Gastrocnemius medialis (tissue), 4 donors: ENCODE measurements at regions of chr17 and their contacts with region 1.

Region 1: DNA sequence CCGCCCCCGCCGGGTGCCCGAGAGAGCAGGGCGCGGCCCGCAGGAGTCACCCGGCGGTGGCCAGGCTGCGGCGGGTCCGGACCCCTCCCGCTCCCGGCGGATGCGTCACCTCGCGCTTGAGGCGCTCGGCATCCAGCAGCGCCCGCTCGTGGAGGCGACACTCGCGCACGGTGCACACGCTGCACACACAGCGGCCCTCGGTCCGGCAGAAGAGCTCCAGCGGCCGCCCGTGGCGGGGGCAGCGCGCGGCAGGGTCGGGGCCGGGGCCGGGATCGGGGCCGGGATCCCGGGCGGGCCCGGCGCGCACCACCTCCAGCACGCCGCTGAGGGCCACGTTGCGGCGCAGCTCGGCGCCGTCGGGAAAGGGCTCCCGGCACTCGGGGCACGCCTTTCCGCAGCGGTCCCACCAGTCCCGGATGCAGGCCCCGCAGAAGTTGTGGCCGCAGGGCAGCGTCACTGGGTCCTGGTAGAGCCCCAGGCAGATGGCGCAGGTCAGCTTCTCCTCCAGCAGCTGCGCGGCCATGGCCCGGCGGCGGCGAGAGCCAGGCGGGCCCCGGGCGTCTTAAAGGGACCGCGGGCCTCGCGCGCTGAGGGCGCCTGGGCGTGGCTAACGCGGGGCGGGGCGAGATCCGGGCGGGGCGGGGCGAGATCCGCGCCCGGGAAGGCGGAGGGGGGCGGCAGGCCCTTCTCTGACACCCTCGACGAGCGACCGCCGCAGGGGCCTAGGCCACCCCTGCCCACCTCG is at the start of gene TRIM65:
- DNase-seq: peak; percentile 76 to 82
- ATAC-seq: peak; percentile 85 to 86
- H3K4me3 ChIP-seq: peak within 1 kb of the TSS; percentile 60 to 72 (median 64)
- H3K27ac ChIP-seq: peak within 1 kb of the TSS; percentile 80 to 96 (median 92)
- H3K4me1 ChIP-seq: peaks cover 16 to 28% of the 10 kb centered on the region in 2 donors
- H3K27me3 ChIP-seq: no peaks in the 10 kb centered on the region
- CTCF ChIP-seq: peak in 4 of 5 experiments; percentile 19 to 65 (median 50)
- POLR2A ChIP-seq: peak; percentile 80 to 81
- total RNA-seq, gene TRIM65: 16.5 to 26.1 (median 22.3) TPM

Region 2: DNA sequence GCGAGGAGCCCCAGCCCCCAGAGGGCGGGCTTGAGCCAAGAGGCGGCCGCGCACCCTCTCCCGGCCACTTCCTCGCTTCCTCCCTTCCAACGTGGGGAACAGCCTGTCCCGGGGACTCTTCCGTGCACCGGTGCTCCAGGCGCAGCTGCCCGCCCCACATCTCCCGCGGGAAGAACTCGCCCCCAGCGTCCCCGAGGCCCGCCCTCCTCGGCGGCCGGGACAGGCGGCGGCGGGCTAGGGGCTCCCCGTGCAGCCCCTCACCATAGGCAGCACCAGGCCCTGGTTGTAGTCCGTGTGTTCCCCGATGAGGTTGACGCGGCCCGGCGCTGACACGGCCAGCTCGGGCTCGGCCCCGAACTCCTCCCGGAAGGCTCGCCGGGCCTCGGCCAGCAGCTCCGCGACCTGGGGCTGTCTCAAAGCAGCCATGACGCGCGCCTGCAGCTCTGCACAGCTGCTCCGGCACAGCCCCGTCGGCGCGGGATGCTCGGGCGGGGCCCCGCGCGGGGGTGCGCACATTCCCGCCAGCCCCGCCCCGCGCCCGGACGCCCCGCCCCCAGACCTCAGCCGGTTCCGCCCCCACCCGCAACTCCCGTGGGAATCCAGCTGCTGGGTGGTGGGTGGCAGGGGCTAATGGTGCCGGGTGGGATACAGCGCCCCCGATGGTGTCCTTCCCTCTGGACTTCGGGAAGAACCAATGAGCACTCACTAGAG is 131.7 kb before region 1 on chr17 and contains the start of gene GALK1:
- in situ Hi-C with region 1: loop called in 1 of 4 experiments (anchors 25 kb)
- intact Hi-C with region 1: loop called (anchors 5 kb)
- DNase-seq: peak; percentile 47 to 59
- ATAC-seq: peak; percentile 80
- H3K4me3 ChIP-seq: peak within 1 kb of the TSS; percentile 58 to 83 (median 72)
- H3K27ac ChIP-seq: peak within 1 kb of the TSS; percentile 54 to 81 (median 74)
- H3K4me1 ChIP-seq: peaks cover 6 to 14% of the 10 kb centered on the region in 2 donors
- H3K27me3 ChIP-seq: no peaks in the 10 kb centered on the region
- CTCF ChIP-seq: peak; percentile 13 to 81 (median 69)
- POLR2A ChIP-seq: peak; percentile 30 to 59
- total RNA-seq, gene GALK1: 8.7 to 18.3 (median 11.0) TPM

Region 3: DNA sequence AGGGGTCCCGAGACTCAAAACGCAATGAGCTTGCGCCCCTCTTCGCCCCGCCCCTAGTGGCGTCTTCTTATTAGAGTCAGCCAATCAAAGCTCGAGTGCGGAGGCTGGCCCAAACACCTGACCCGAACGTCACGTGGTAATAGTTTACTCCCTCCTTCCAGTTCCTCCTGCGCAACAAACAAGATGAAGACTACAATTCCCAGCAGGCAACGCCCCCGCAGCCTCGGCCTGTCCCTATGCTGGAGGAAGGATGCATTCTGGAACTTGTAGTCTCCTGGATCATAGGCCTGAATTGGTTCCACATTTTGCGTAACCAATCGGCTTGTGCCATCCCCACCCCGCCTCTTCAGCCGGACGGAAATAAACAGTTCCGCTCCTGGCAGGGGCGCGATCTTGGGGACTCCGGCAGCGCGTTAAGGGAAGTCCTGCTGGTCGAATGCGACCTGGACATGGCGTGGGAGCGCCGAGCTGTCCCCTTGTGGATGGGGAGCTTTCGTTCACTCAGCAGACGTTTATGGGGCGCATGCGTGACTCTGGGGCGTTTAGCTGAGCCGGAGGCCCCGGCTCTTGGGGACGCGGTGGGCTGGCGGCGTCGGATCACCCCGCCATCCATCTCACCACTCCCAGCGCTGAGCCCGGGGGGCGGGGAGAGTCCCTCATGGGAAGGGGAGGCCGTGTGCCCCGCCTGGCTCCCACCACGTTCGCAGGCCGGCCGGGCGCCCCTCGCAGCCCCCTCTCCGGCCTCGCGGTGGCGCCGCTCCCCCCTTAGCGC is 41.1 kb before region 1 on chr17 and contains the start of gene WBP2:
- in situ Hi-C with region 1: no loop called
- intact Hi-C with region 1: loop called (anchors 1 kb)
- DNase-seq: peak; percentile 100
- ATAC-seq: peak; percentile 79 to 80
- H3K4me3 ChIP-seq: peak within 1 kb of the TSS; percentile 63 to 85 (median 78)
- H3K27ac ChIP-seq: peak within 1 kb of the TSS; percentile 95 to 99 (median 96)
- H3K4me1 ChIP-seq: peaks cover 39 to 40% of the 10 kb centered on the region in 2 donors
- H3K27me3 ChIP-seq: no peaks in the 10 kb centered on the region
- CTCF ChIP-seq: peak; percentile 54 to 79 (median 61)
- POLR2A ChIP-seq: peak; percentile 96 to 100
- total RNA-seq, gene WBP2: 129 to 259 (median 148) TPM

Region 4: DNA sequence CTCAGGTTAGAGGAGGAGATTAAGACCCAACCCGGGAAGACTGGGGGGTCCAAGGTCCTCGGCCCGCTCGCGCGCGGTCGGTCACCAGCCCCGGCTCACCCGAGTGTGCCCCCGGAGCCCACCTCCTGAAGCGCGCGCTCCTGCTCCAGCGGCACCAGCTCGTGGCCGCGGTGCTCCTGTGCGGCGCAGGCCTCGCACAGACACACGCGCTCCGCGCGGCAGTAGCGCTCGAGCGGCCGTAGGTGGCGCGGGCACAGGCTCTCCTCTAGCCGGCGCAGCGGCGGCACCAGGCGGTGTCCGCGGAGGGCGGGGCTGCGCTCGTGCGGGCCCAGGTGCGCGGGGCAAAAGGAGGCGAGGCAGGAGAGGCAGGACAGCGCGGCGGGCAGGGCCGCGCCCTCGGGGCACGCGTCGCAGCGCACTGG is 18.8 kb before region 1 on chr17:
- in situ Hi-C with region 1: no loop called
- intact Hi-C with region 1: loop called (anchors 1 kb)
- DNase-seq: peak; percentile 42 to 60
- ATAC-seq: peak; percentile 53 to 59
- H3K4me3 ChIP-seq: peak overlapping the region; percentile 56 to 87 (median 70)
- H3K27ac ChIP-seq: peak overlapping the region; percentile 79 to 92 (median 86)
- H3K4me1 ChIP-seq: peaks cover 37 to 38% of the 10 kb centered on the region in 2 donors
- H3K27me3 ChIP-seq: no peaks in the 10 kb centered on the region
- CTCF ChIP-seq: peak in 4 of 5 experiments; percentile 45 to 65 (median 58)
- POLR2A ChIP-seq: no peak

Region 5: GRCh38 chr17:76079956-76080767 is 183.6 kb after region 1 on chr17:
- in situ Hi-C with region 1: no loop called
- intact Hi-C with region 1: no loop called
- DNase-seq: no peak
- ATAC-seq: no peak
- H3K4me3 ChIP-seq: no peak overlapping the region
- H3K27ac ChIP-seq: no peak overlapping the region
- H3K4me1 ChIP-seq: peaks cover 16 to 19% of the 10 kb centered on the region in 2 donors
- H3K27me3 ChIP-seq: peaks cover 42 to 45% (median 43%) of the 10 kb centered on the region in 3 donors
- CTCF ChIP-seq: no peak
- POLR2A ChIP-seq: no peak